ENCODE measurements at regions of chr19 and their contacts with region 1.

Region 1: DNA sequence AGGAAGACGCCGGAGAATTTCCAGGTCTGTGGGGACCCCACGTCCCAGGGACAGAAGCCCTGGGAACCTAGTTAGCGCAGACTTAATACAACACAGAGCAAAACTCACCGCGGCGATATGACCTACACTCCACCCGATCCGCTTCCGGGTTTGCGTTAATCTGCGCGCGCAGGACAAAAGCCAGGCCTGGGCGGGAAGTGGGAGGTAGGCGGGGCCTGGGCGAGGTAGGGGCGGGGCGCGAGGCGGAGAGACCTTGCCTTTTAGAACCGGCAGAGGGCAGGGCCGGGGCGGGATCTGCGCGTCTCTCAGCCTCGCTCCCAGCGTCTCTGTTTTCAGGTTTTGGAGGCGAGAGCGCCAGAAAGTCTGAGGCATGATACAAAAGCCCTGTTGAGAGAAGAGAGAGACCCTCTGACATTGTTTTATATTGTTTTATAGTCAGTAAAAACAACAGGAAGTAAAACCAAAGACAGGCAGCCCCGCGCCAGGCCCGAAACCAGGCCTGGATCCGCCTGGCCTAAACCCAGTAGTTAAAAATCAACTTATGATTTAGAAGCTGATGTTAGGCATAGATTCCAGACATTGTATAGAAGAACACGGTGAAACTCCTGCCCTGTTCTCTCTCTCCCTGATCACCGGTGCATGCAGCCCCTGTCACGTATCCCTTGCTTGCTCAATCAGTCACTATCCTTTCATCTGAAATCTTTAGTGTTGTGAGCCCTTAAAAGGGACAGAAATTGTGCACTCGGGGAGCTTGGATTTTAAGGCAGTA is at the start of gene ZNF611:
- DNase-seq: peak; percentile 99
- ATAC-seq: peak; percentile 99
- total RNA-seq, gene ZNF611: 7.4 TPM

Region 2: GRCh38 chr19:52527134-52527955 is 207.7 kb before region 1 on chr19 and contains the start of gene ZNF808:
- intact Hi-C with region 1: loop called (anchors 5 kb)
- DNase-seq: peak; percentile 99
- ATAC-seq: peak; percentile 98
- total RNA-seq, gene ZNF808: 30.9 TPM

Region 3: GRCh38 chr19:52690369-52691214 is 44.5 kb before region 1 on chr19:
- intact Hi-C with region 1: loop called (anchors 5 kb)
- DNase-seq: peak; percentile 98
- ATAC-seq: peak; percentile 100

Region 4: DNA sequence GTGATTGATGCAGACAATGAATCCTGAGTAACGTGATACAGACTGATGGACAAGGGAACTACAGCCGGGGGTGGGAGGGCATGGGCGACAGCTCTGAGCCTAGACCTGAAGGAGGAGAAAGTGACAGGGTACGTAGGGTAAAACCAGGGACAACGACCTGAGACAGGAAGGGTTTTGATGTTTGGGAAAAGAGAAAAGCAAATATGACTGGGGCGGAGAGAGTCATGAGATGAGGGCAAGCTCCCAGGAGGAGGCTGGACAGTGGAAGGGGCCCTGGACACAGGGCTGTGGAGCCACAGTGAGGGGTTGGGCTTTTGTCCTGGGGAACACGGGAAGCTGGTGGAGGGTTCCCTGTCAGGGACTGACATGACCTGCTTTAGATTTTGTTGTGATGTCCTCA is 34.4 kb before region 1 on chr19:
- intact Hi-C with region 1: no loop called
- DNase-seq: no peak
- ATAC-seq: no peak

Region 5: GRCh38 chr19:52722062-52723003 is 12.7 kb before region 1 on chr19:
- intact Hi-C with region 1: no loop called
- DNase-seq: no peak
- ATAC-seq: no peak

Measured in Right ventricle myocardium inferior (tissue), 1 donor.